Dorsolateral prefrontal cortex (tissue), 120 donors: ENCODE measurements at regions of chrX and their contacts with region 1.

Region 1: GRCh38 chrX:108224727-108225621 is 133.4 kb downstream of the ATG4A start:
- DNase-seq: no peak
- H3K4me3 ChIP-seq: peak overlapping the region in 3 of 59 donors; percentile 3 to 14 (median 14)
- H3K27ac ChIP-seq: no peak overlapping the region
- H3K27me3 ChIP-seq: peaks cover 0 to 90% (median 24%) of the 10 kb centered on the region in 45 donors
- CTCF ChIP-seq: peak in 54 of 56 donors; percentile 29 to 72 (median 52)

Region 2: DNA sequence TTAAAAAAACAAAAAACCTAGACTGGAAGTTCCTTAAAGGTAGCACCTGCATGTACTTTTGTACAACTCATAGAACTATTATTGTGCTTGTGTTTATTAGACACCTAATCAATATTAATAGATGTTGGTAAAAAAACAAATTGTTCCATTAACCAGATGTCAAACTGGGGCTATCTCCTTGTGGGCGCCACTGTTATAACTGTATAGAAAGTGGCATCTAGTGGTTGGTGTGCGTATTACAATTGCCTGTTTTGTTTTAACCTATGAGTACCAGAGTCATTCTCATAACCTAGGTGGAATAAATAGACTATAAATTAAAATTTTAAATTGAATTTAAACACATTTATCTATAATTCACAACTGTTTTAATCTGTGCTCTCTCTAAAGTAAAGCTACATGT is 312.0 kb after region 1 on chrX:
- intact Hi-C with region 1: loop called (anchors 5 to 10 kb)
- DNase-seq: no peak
- H3K4me3 ChIP-seq: no peak overlapping the region
- H3K27ac ChIP-seq: no peak overlapping the region
- H3K27me3 ChIP-seq: peaks cover 0 to 39% (median 8%) of the 10 kb centered on the region in 45 donors
- CTCF ChIP-seq: peak in 55 of 56 donors; percentile 37 to 87 (median 68)

Region 3: DNA sequence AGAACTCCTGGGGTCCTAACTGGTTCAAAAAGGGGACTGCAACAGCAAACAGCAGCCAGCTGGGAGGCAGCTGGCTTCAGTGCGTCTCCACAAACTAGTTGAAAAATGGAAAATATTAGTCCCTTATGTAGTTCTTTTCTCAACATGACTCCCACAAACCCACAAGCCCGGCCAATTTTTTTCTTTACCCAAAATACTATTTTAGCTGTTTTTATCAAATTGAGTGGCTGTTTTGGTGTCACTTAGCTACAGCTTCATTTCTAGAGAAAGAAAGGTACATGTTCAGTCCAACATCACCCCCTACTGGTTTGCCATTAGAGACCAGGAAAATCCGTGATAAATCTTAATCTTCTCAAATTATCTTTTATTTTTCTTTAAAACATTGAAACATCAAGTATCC is 1159.7 kb after region 1 on chrX:
- intact Hi-C with region 1: loop called (anchors 5 to 10 kb)
- DNase-seq: no peak
- H3K4me3 ChIP-seq: no peak overlapping the region
- H3K27ac ChIP-seq: no peak overlapping the region
- H3K27me3 ChIP-seq: peaks cover 0 to 95% (median 48%) of the 10 kb centered on the region in 45 donors
- CTCF ChIP-seq: peak in 55 of 56 donors; percentile 23 to 70 (median 52)